ENCODE measurements at regions of chr17 and their contacts with region 1.

Region 1: DNA sequence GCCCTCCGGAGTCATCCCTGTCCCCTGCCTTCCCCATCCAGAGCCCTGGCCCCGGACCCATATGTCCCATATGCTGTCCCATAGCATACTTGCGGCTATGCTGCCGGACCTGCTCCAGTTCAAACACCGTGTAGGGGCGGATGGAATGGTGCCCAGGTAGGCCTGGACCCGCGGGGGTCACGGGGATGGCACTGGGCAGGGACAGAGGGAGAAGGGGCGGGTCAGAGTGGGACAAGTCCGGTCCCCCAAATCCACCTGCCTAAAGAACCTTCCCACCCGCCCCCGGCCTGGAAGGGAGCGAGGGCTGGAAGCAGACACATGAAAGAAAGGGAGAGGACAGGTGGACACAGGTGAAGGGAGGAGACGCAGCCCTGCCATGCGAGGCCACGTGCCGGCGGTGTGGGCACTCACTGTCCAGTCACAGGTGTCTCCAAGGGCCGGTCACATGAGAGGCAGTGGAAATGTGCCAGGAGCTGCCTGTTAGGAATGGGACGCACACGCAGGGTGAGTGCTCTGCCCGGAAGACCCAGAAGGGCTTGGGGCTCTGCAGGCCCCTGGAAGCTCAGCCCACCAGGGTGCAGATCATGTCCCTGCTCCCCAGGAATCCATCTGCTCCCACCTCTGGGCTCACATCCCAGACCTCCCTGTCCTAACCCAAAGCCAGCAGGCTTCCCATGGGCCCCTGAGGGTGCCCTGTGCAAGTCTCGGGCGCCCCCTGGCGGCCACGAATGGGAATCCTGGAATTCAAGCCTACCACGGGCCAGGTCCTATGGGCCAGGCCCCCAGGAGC is 14.0 kb downstream of the UBALD2 start:
- DNase-seq: peak; percentile 87 to 94 (median 90)
- ATAC-seq: peak; percentile 97
- H3K4me3 ChIP-seq: no peak overlapping the region
- H3K27ac ChIP-seq: no peak overlapping the region
- H3K4me1 ChIP-seq: peaks cover 12 to 75% of the 10 kb centered on the region in 2 experiments; a peak in 4 of 5 replicates
- H3K27me3 ChIP-seq: no peaks in the 10 kb centered on the region
- CTCF ChIP-seq: peak; percentile 96 to 97 (median 96)
- EP300 ChIP-seq: no peak
- POLR2A ChIP-seq: no peak
- RAD21 ChIP-seq: peak; percentile 98 to 100

Region 2: DNA sequence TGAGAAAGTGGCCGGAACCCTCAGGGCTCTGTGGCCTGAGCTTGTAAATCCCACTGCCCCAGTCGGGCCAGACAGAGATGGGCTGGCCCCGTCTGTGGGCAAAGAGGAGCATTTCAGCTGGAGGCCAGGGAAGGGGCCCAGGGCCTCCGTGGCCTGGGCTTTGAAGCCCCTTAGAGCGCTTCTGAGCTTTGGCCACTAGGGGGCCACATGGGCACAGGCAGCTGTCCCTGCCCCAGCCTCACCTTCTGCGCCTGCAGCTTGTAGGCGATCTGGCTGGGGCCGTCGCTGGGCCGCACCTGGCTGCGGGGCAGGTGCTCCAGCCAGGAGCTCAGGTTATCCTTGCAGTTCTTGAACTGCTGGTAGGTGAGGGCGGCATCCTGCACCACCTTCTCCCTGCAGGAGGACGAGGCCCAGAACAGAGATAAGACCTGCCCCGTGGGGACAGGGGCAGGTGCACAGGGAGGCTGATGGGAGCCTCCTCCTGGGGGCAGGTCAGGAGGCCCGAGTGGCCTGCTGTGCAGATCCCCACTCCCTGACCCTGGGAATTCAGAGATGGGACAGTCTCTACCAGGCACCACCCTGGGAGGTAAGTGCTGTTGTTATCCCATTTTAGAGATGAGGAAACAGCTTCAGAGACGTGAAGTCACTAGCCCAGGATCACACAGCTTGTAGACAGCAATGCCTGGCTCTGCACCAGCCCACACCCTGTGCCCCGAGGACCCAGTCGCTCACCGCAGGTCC is 264.8 kb before region 1 on chr17:
- CTCF ChIA-PET with region 1: interaction called, 13 read pairs
- POLR2A ChIA-PET with region 1: interaction called, 3 read pairs
- in situ Hi-C with region 1: no loop called
- intact Hi-C with region 1: loop called (anchors 5 kb)
- DNase-seq: peak; percentile 84 to 90 (median 88)
- ATAC-seq: peak; percentile 97
- H3K4me3 ChIP-seq: no peak overlapping the region
- H3K27ac ChIP-seq: no peak overlapping the region
- H3K4me1 ChIP-seq: peaks cover 0 to 49% of the 10 kb centered on the region in 2 experiments; a peak in 3 of 5 replicates
- H3K27me3 ChIP-seq: peaks cover 32 to 72% of the 10 kb centered on the region in 2 experiments; a peak in 4 of 5 replicates
- CTCF ChIP-seq: peak; percentile 94 to 96 (median 94)
- EP300 ChIP-seq: no peak
- POLR2A ChIP-seq: no peak
- RAD21 ChIP-seq: peak; percentile 79 to 96

Measured in K562 (cell line).